SK-N-SH (cell line): ENCODE measurements at regions of chr19 and their contacts with region 1.

Region 1: GRCh38 chr19:7943444-7944176 is at the start of gene TIMM44:
- DNase-seq: peak; percentile 97
- H3K4me3 ChIP-seq: peak within 1 kb of the TSS; percentile 70 to 74
- H3K27ac ChIP-seq: peak within 1 kb of the TSS; percentile 62 to 85
- H3K4me1 ChIP-seq: peaks cover 0 to 6% of the 10 kb centered on the region in 2 experiments; a peak in 1 of 4 replicates
- H3K27me3 ChIP-seq: no peaks in the 10 kb centered on the region
- CTCF ChIP-seq: no peak
- EP300 ChIP-seq: no peak
- RAD21 ChIP-seq: no peak
- polyA plus RNA-seq, gene TIMM44: 49.7 and 50.9 TPM in 2 replicates

Region 2: DNA sequence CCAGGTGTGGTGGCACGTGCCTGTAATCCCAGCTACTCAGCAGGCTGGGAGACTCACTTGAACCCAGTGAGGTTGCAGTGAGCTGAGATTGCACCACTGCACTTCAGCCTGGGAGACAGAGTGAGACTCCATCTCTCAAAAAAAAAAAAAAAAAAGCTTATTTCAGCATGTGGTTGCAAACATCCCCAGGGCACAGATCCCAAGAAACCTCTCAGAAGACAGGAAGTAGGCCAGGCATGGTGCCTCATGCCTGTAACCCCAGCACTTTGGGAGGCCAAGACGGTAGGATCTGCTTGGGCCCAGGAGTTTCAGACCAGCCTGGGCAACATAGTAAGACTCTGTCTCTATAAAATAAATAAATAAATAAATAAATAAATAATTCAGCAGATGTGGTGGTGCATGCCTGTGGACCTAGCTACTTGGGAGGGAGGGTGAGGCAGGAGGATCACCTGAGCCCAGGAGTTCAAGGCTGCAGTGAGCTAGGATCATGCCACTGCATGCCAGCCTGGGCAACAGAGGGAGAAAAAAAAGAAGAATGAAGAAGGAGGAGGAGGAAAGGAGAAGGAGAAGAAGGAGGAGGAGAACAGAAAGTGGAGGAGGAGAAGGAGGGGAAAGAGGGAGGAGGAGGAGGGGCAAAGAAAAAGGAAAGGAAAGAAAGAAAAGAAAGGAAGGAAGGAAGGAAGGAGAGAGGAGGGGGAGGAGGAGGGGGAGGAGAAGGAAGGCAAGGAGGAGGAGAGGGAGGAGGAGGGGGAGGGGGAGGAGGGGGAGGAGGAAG is 59.6 kb before region 1 on chr19:
- CTCF ChIA-PET with region 1: no interaction called
- POLR2A ChIA-PET with region 1: no interaction called
- DNase-seq: no peak
- H3K4me3 ChIP-seq: no peak overlapping the region
- H3K27ac ChIP-seq: no peak overlapping the region
- H3K4me1 ChIP-seq: no peaks in the 10 kb centered on the region
- H3K27me3 ChIP-seq: no peaks in the 10 kb centered on the region; the same call in 1 of the 2 replicates
- CTCF ChIP-seq: no peak
- EP300 ChIP-seq: no peak
- RAD21 ChIP-seq: no peak

Region 3: GRCh38 chr19:7919610-7920518 is 23.7 kb before region 1 on chr19 and contains the start of gene SNAPC2:
- CTCF ChIA-PET with region 1: interaction called, 13 read pairs
- POLR2A ChIA-PET with region 1: interaction called, 10 read pairs
- DNase-seq: peak; percentile 90
- H3K4me3 ChIP-seq: peak within 1 kb of the TSS; percentile 77
- H3K27ac ChIP-seq: peak within 1 kb of the TSS; percentile 86 to 92
- H3K4me1 ChIP-seq: peaks cover 10 to 41% of the 10 kb centered on the region in 2 experiments; a peak in 2 of 4 replicates
- H3K27me3 ChIP-seq: peaks cover 7% of the 10 kb centered on the region; the same call in 1 of the 2 replicates
- CTCF ChIP-seq: no peak
- EP300 ChIP-seq: no peak; a peak in 1 of 4 replicates
- RAD21 ChIP-seq: no peak
- polyA plus RNA-seq, gene SNAPC2: 29.7 and 38.7 TPM in 2 replicates

Region 4: GRCh38 chr19:7925171-7925851 is 18.3 kb before region 1 on chr19:
- CTCF ChIA-PET with region 1: interaction called, 69 read pairs
- POLR2A ChIA-PET with region 1: interaction called, 15 read pairs
- DNase-seq: peak; percentile 94
- H3K4me3 ChIP-seq: peak overlapping the region; percentile 64 to 72
- H3K27ac ChIP-seq: peak overlapping the region in 1 of 2 experiments; percentile 81; a peak in 2 of 4 replicates
- H3K4me1 ChIP-seq: peaks cover 43 to 63% of the 10 kb centered on the region in 2 experiments
- H3K27me3 ChIP-seq: no peaks in the 10 kb centered on the region
- CTCF ChIP-seq: peak; percentile 83
- EP300 ChIP-seq: no peak
- RAD21 ChIP-seq: peak; percentile 54

Region 5: DNA sequence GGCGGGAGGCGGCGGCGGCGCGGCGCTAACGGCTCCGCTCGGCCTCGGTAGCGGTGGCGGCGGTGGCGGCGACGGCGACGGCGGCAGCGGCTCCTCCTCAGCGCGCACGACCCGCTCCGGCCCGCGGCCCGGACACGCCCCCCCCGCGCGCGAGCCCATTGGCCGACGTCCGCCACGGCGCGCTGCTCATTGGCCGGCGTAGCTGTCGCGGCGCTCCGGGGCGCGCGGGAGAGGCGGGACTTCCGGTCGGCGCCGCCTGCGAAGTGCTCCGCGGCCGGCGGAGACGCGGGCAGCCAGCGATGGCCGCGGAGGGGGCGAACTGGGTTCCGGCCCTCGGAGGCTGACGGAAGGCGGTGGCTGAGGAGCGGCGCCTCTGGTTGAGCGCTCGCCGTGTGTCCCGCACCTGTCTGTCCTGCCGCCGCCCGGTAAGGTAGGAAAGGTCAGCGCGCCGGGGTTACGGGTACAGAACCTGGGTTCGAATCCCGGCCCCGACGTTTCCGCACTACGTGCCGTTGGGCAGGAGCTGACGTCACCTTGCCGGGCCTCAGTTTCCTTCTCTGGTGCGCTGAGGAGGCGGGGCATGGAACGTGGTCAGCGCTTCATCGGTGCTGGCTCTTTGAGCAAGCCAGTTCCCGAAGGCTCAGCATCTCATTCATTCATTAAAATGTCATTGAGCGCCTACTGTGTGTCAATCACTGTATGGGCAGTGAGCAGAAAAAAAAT is 62.1 kb after region 1 on chr19 and contains the start of gene ELAVL1:
- CTCF ChIA-PET with region 1: interaction called, 32 read pairs
- POLR2A ChIA-PET with region 1: interaction called, 14 read pairs
- DNase-seq: peak; percentile 98
- H3K4me3 ChIP-seq: peak within 1 kb of the TSS; percentile 71 to 90
- H3K27ac ChIP-seq: peak within 1 kb of the TSS; percentile 66 to 73
- H3K4me1 ChIP-seq: peaks cover 5 to 23% of the 10 kb centered on the region in 2 experiments; a peak in 2 of 4 replicates
- H3K27me3 ChIP-seq: no peaks in the 10 kb centered on the region
- CTCF ChIP-seq: no peak
- EP300 ChIP-seq: no peak
- RAD21 ChIP-seq: no peak
- polyA plus RNA-seq, gene ELAVL1: 41.7 and 49.6 TPM in 2 replicates

Region 6: GRCh38 chr19:8269724-8270123 is 326.1 kb after region 1 on chr19:
- CTCF ChIA-PET with region 1: interaction called, 10 read pairs
- POLR2A ChIA-PET with region 1: no interaction called
- DNase-seq: no peak
- H3K4me3 ChIP-seq: no peak overlapping the region
- H3K27ac ChIP-seq: no peak overlapping the region
- H3K4me1 ChIP-seq: peaks cover 0 to 4% of the 10 kb centered on the region in 2 experiments; a peak in 1 of 4 replicates
- H3K27me3 ChIP-seq: no peaks in the 10 kb centered on the region; the same call in 1 of the 2 replicates
- CTCF ChIP-seq: no peak
- EP300 ChIP-seq: no peak
- RAD21 ChIP-seq: no peak